Activated T-helper 1 cell treated with anti-CD3 and anti-CD28 coated beads, Interleukin-12 subunit alpha, Interleukin-12 subunit beta, Interleukin-2, Interleukin-4 antibody, amounts not matched to agents 30 ng/mL and 10 ng/mL and 1 ng/mL, durations not matched to agents 14 hours and 24 hours and 36 hours (primary cell): ENCODE measurements at regions of chr17 and their contacts with region 1.

Region 1: GRCh38 chr17:17681187-17681848 is at the start of gene RAI1:
- DNase-seq: peak; percentile 64
- H3K4me3 Mint-ChIP-seq: peak within 1 kb of the TSS; percentile 89
- H3K27ac Mint-ChIP-seq: peak within 1 kb of the TSS; percentile 84
- H3K4me1 Mint-ChIP-seq: peaks cover 22% of the 10 kb centered on the region
- H3K27me3 Mint-ChIP-seq: peaks cover 10% of the 10 kb centered on the region
- total RNA-seq, gene RAI1: 31.1 and 32.3 TPM in 2 replicates

Region 2: GRCh38 chr17:17723354-17724261 is 42.3 kb after region 1 on chr17:
- intact Hi-C with region 1: loop called (anchors 5 kb)
- DNase-seq: no peak
- H3K4me3 Mint-ChIP-seq: peak overlapping the region; percentile 81
- H3K27ac Mint-ChIP-seq: peak overlapping the region; percentile 2
- H3K4me1 Mint-ChIP-seq: peaks cover 26% of the 10 kb centered on the region
- H3K27me3 Mint-ChIP-seq: peaks cover 38% of the 10 kb centered on the region

Region 3: GRCh38 chr17:17792551-17793377 is 111.4 kb after region 1 on chr17:
- intact Hi-C with region 1: loop called (anchors 1 kb)
- DNase-seq: peak; percentile 68
- H3K4me3 Mint-ChIP-seq: peak overlapping the region; percentile 42
- H3K27ac Mint-ChIP-seq: peak overlapping the region; percentile 84
- H3K4me1 Mint-ChIP-seq: peaks cover 26% of the 10 kb centered on the region
- H3K27me3 Mint-ChIP-seq: no peaks in the 10 kb centered on the region

Region 4: DNA sequence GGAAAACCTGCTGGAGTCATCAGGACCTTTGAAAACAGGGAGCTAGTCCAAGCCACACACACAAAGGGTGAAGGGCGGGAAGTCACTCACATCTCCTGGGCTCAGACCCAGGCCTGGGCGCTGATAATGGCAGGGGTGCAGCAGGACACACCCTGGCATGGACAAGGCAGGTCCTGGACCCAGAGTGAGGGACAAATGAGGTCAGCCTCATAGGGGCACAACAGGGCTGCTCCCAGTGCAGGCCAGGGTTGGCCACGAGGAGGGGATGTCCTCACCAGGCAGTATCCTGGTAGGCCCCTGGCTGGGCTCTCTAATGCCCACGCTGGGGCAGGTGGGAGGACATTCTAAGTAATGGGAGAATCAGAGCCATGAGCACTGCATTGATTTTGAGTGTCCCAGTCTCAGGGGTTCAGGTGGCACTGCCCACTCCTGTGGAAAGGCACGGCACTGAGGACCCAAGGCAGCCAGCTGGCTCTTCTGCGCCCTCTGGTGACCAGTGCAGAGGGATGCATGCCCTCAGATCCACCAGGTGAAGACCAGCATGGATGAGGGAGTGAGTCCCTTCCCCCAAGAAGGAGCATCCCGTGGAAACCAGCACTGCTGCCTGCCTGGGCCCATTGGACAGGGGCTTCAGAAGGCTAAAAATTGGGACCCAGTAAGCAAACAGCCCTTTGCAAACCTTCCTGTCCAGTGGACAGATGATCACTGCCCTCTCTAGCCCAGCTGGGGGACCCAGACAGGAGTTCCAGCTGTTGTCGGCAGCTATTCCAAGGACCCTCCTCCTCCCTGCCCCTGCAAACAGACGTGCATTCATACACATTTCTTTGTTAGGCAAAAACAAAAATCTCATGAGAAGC is 178.8 kb after region 1 on chr17:
- intact Hi-C with region 1: loop called (anchors 1 kb)
- DNase-seq: peak; percentile 59
- H3K4me3 Mint-ChIP-seq: no peak overlapping the region
- H3K27ac Mint-ChIP-seq: no peak overlapping the region
- H3K4me1 Mint-ChIP-seq: peaks cover 24% of the 10 kb centered on the region
- H3K27me3 Mint-ChIP-seq: no peaks in the 10 kb centered on the region